Adrenal gland (tissue), 19 donors: ENCODE measurements at regions of chr20 and their contacts with region 1.

Region 1: DNA sequence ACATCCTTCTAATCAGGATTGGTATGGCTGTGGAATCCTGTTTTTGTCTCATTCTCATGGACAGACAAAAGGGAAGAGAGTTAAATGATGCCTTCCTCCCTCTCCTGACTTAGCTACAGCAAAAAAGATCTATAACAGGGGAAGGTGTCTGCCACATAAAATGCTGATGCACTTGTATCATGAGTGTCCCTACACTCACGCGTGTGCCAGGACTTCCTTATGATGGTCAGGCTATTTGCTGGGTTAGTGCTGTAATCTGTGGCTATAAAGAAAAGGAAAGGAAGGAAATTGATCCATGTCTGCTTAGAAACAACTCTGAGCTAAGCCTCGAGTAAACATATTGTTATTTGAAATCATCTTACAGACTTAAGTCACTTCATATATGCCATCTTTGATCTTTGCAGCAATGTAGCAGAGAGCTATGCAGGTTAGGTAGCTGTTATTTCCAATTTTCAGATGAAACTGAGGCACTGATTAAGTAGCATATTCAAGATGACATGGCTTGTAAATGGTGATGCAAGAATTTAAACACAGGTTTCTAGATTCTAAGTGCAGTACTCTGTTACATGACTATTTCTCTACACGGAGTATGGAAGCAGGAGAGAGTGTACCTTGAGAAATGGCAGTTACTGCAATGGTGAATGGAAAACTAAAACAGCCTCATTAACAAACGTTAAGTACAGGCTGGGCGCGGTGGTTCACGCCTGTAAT is 8.4 kb upstream of the DHX35 start:
- DNase-seq: no peak
- H3K4me3 ChIP-seq: no peak overlapping the region
- H3K27ac ChIP-seq: no peak overlapping the region
- H3K4me1 ChIP-seq: no peaks in the 10 kb centered on the region
- H3K27me3 ChIP-seq: no peaks in the 10 kb centered on the region
- CTCF ChIP-seq: no peak
- POLR2A ChIP-seq: no peak

Region 2: DNA sequence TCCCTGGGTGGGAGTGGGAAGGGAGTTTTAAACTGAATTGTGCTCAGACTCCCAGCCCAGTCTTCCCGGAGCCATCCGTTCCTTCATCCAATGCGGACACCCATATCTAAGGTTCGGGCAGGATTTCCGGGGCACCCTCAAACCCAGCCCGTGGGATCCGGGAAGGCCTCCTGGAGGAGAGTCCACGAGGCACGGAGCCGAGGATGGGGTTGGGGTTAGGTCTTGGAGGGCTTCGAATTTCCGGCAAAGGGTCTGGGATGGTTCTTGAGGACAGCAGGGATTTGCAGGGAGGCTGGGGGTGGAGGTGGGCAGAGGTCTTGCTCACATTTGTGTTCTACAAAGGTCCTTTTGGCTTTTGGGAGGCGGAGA is 279.0 kb before region 1 on chr20:
- intact Hi-C with region 1: loop called in 1 of 2 experiments (anchors 5 kb)
- DNase-seq: no peak
- H3K4me3 ChIP-seq: peak overlapping the region in 1 of 4 donors; percentile 46
- H3K27ac ChIP-seq: no peak overlapping the region
- H3K4me1 ChIP-seq: peaks cover 9 to 10% of the 10 kb centered on the region in 2 donors
- H3K27me3 ChIP-seq: peaks cover 22% of the 10 kb centered on the region
- CTCF ChIP-seq: no peak
- POLR2A ChIP-seq: no peak